PC-9 (cell line): ENCODE measurements at regions of chr16 and their contacts with region 1.

Region 1: GRCh38 chr16:12207939-12208685 is 231.6 kb downstream of the SNX29 start:
- DNase-seq: peak in 1 of 2 experiments; percentile 62
- H3K4me3 ChIP-seq: no peak overlapping the region
- H3K27ac ChIP-seq: no peak overlapping the region
- H3K4me1 ChIP-seq: no peaks in the 10 kb centered on the region
- H3K27me3 ChIP-seq: no peaks in the 10 kb centered on the region
- CTCF ChIP-seq: no peak

Region 2: GRCh38 chr16:11915644-11916523 is 292.2 kb before region 1 on chr16 and contains the start of gene GSPT1:
- CTCF ChIA-PET with region 1: no interaction called
- POLR2A ChIA-PET with region 1: no interaction called
- intact Hi-C with region 1: no loop called
- DNase-seq: peak; percentile 95 to 100
- H3K4me3 ChIP-seq: peak within 1 kb of the TSS; percentile 93
- H3K27ac ChIP-seq: peak within 1 kb of the TSS; percentile 97
- H3K4me1 ChIP-seq: peaks cover 40% of the 10 kb centered on the region
- H3K27me3 ChIP-seq: no peaks in the 10 kb centered on the region
- CTCF ChIP-seq: 0 out of 2 replicates have a peak, but pooled peaks have one; percentile 22
- total RNA-seq, gene GSPT1: 146 and 161 TPM in 2 replicates

Region 3: DNA sequence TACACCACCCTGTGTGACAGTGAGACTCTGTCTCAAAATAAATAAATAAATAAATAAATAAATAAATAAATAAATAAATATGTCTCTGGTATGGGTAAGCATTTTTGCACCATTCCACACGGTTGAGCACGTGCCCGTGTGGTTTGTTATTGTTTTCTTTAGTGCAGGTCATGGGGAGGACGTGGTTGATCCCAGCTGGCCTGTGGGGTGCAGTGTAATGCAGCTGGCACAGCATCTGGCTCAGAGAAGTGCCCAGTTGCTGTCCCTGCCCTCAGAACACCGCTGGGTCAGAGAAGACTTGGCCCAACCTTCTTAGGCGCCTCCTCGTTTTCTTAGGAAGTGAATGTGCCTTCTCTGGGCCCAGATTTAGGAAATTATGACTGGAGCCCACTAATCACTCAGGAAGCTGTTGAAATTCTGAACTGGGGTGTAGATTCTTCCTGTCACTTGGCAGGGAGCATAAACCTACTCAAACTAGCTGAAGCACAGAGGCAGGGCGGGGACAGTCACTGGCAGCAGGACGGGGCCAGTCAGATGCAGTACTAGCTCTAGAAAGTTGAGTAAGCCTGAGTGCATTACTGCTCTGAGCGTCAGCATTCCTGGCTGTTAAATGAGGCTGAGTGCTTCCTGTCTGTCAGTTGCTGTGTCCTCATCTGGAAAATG is 145.6 kb before region 1 on chr16:
- CTCF ChIA-PET with region 1: no interaction called
- POLR2A ChIA-PET with region 1: interaction called, 10 read pairs
- intact Hi-C with region 1: no loop called
- DNase-seq: peak; percentile 58 to 70
- H3K4me3 ChIP-seq: no peak overlapping the region
- H3K27ac ChIP-seq: no peak overlapping the region
- H3K4me1 ChIP-seq: no peaks in the 10 kb centered on the region
- H3K27me3 ChIP-seq: no peaks in the 10 kb centered on the region
- CTCF ChIP-seq: no peak

Region 4: DNA sequence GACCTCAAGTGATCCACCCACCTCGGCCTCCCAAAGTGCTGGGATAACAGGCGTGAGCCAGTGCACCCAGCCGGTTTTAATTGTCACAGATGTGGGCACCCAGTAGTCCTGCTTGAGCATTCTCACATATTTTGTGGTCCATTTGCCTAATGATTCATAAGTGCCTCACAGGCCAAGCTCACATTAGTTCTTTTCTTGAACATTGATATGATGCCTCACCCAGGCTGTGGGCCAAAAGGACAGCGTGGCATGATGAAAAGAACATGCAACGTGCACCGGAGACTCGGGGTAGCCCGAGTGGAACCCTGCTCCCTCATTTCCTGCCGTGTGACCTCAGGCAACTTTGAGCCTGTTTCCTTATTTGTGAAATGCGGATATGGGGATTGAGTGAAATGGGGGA is 49.7 kb before region 1 on chr16:
- CTCF ChIA-PET with region 1: no interaction called
- POLR2A ChIA-PET with region 1: no interaction called
- intact Hi-C with region 1: loop called (anchors 5 kb)
- DNase-seq: no peak
- H3K4me3 ChIP-seq: no peak overlapping the region
- H3K27ac ChIP-seq: no peak overlapping the region
- H3K4me1 ChIP-seq: peaks cover 9% of the 10 kb centered on the region; the same call in 1 of the 2 replicates
- H3K27me3 ChIP-seq: no peaks in the 10 kb centered on the region
- CTCF ChIP-seq: no peak